Activated CD8-positive, alpha-beta T cell treated with anti-CD3 and anti-CD28 coated beads for 36 hours (primary cell): ENCODE measurements at regions of chr7 and their contacts with region 1.

Region 1: DNA sequence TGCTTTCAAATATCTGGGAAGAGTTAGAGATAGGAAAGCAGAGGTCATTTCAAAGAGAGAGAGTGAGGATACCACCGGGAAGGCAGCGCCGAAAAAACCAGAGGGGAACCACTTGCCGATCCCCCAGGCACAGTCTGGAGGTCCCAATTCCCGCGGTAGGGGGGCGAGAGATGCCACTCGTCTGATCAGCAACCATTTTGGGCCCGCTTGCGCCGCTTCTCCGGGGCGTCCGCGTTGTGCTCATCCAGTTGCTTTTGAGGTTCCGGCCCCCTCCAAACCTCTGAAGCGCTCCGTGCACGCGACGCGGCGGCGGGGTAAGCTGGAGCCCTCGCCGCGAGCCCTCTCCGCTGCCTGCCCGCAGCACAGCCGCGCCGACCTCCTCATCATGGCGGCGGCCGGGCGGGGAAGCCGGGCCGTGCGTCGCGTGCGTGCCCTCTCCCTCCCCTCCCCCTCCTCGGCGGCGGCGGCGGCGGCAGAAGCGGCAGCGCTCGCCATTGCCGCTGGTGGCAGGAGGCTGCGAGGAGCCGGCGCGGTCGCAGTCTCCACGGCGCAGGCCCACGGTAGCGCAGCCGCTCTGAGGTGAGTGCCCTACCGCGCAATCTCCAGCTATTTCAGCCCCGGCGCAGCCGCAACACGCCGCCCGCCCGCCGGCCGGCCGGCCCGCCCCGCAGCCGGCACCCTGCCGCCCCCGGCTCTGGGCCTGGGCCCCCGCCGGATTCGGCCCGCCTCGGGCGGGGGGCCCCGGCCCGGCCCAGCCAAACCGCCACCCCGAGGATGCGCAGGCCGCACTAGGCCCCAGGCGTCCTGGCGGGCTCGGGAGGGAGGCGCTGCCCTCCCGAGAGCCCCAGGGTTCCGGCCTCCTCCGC is at the start of gene NRF1:
- DNase-seq: peak; percentile 90
- ATAC-seq: peak; percentile 85
- H3K4me3 Mint-ChIP-seq: peak within 1 kb of the TSS; percentile 96
- H3K27ac Mint-ChIP-seq: peak within 1 kb of the TSS; percentile 99
- H3K4me1 Mint-ChIP-seq: peaks cover 62% of the 10 kb centered on the region
- H3K27me3 Mint-ChIP-seq: no peaks in the 10 kb centered on the region
- CTCF ChIP-seq: no peak
- total RNA-seq, gene NRF1: 23.3 to 23.9 TPM

Region 2: GRCh38 chr7:129494041-129494440 is 117.4 kb before region 1 on chr7:
- CTCF ChIA-PET with region 1: no interaction called
- POLR2A ChIA-PET with region 1: no interaction called
- intact Hi-C with region 1: loop called (anchors 10 kb)
- DNase-seq: peak; percentile 35
- ATAC-seq: peak; percentile 72
- H3K4me3 Mint-ChIP-seq: no peak overlapping the region
- H3K27ac Mint-ChIP-seq: no peak overlapping the region
- H3K4me1 Mint-ChIP-seq: peaks cover 14% of the 10 kb centered on the region
- H3K27me3 Mint-ChIP-seq: peaks cover 2% of the 10 kb centered on the region
- CTCF ChIP-seq: no peak

Region 3: GRCh38 chr7:129635300-129636029 is 24.0 kb after region 1 on chr7:
- CTCF ChIA-PET with region 1: interaction called, 15 read pairs
- POLR2A ChIA-PET with region 1: interaction called, 7 read pairs
- intact Hi-C with region 1: loop called (anchors 2 kb)
- DNase-seq: peak; percentile 87
- ATAC-seq: peak; percentile 98
- H3K4me3 Mint-ChIP-seq: no peak overlapping the region
- H3K27ac Mint-ChIP-seq: no peak overlapping the region
- H3K4me1 Mint-ChIP-seq: peaks cover 46% of the 10 kb centered on the region
- H3K27me3 Mint-ChIP-seq: no peaks in the 10 kb centered on the region
- CTCF ChIP-seq: peak; percentile 89

Region 4: DNA sequence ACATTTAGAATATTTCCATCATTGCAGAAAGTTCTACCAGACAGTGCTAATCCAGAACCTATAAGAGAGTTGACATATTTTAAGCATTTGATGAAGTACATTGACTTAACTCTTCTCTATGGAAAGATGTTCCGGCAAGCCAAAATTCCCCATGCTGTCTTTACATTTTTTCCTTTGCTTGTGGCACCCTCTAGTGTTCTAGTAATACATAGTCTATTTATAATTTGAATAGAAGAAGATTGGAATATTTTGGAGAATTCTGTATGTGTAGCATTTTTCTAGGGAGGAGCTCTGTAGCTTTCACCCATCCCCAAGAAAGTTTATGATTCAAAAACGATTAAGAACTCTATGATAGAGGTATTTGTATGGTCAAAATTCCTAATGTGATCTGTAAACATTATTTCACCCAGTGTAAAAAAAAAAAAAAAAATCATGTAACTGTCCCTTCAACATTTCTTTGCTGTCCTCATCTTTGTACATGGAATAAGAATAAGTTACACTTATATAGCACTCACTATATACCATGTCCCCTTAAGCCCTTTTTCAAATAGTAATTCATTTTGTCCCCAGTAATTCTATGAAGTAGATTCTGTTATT is 33.3 kb after region 1 on chr7:
- CTCF ChIA-PET with region 1: interaction called, 11 read pairs
- POLR2A ChIA-PET with region 1: interaction called, 4 read pairs
- intact Hi-C with region 1: no loop called
- DNase-seq: no peak
- ATAC-seq: no peak
- H3K4me3 Mint-ChIP-seq: no peak overlapping the region
- H3K27ac Mint-ChIP-seq: no peak overlapping the region
- H3K4me1 Mint-ChIP-seq: peaks cover 35% of the 10 kb centered on the region
- H3K27me3 Mint-ChIP-seq: no peaks in the 10 kb centered on the region
- CTCF ChIP-seq: peak; percentile 58